Activated CD4-positive, alpha-beta memory T cell treated with anti-CD3 and anti-CD28 coated beads, Interleukin-2, amount 10 ng/mL, durations not matched to agents 7 days and 5 days (primary cell): ENCODE measurements at regions of chr7 and their contacts with region 1.

Region 1: DNA sequence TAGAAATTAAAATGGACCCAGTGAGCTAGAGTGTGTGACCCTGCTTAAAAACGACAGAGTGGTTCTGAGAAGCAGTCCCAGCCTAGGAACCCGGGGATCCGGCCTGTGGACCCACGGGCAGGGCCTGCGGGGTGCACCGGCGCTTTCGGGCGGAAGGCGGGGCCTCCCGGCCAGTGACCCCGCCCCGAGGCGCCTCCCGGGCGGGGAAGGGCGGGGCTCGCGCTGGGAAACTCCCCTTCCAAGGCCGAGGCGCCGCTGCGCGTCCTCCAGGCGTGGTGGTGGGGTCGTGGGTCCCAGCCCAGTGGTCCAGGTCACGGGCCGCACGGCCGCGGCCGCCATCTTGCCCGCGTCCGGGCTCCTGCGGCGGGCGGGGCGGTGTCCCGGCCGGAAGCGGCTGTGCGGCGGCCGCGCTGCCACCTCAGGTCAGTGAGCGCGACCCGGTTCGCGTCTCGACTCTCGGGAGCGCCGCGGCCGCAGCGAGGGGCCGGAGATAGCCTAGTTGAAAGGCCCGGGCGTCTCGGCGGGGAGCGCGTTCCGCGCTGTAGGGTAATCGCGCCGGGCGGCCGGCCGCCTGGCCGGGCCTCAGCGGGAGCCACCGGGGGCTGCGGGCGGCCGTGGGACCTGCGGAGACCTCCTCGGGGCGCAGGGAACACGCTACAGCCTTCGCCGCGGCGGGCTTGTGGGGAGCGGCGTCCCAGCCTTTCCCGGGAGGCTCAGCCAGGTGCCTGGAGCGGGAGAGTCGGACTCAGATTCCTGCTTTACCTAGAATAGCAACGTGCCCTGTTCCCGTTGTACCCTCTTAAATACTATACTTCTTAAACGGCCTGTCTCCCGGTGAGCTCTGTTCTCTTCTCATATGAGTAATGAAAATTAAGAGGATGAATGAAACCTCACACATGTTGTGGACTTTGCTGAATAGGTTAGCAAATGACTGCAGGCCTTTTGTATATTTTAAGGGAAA is at the start of gene MIOS:
- DNase-seq: peak; percentile 83
- H3K4me3 Mint-ChIP-seq: peak within 1 kb of the TSS; percentile 67
- H3K27ac Mint-ChIP-seq: peak within 1 kb of the TSS; percentile 36
- H3K4me1 Mint-ChIP-seq: peaks cover 34% of the 10 kb centered on the region
- H3K27me3 Mint-ChIP-seq: no peaks in the 10 kb centered on the region
- total RNA-seq, gene MIOS: 22.8 to 24.6 TPM

Region 2: GRCh38 chr7:7607010-7607409 is 40.1 kb after region 1 on chr7:
- CTCF ChIA-PET with region 1: no interaction called
- POLR2A ChIA-PET with region 1: no interaction called
- DNase-seq: no peak
- H3K4me3 Mint-ChIP-seq: no peak overlapping the region
- H3K27ac Mint-ChIP-seq: no peak overlapping the region
- H3K4me1 Mint-ChIP-seq: no peaks in the 10 kb centered on the region
- H3K27me3 Mint-ChIP-seq: no peaks in the 10 kb centered on the region

Region 3: GRCh38 chr7:7640221-7641128 is 73.5 kb after region 1 on chr7 and contains the start of gene UMAD1:
- CTCF ChIA-PET with region 1: no interaction called
- POLR2A ChIA-PET with region 1: interaction called, 36 read pairs
- DNase-seq: peak; percentile 99
- H3K4me3 Mint-ChIP-seq: peak within 1 kb of the TSS; percentile 90
- H3K27ac Mint-ChIP-seq: peak within 1 kb of the TSS; percentile 90
- H3K4me1 Mint-ChIP-seq: peaks cover 36% of the 10 kb centered on the region
- H3K27me3 Mint-ChIP-seq: no peaks in the 10 kb centered on the region
- total RNA-seq, gene UMAD1: 16.1 to 16.7 TPM

Region 4: DNA sequence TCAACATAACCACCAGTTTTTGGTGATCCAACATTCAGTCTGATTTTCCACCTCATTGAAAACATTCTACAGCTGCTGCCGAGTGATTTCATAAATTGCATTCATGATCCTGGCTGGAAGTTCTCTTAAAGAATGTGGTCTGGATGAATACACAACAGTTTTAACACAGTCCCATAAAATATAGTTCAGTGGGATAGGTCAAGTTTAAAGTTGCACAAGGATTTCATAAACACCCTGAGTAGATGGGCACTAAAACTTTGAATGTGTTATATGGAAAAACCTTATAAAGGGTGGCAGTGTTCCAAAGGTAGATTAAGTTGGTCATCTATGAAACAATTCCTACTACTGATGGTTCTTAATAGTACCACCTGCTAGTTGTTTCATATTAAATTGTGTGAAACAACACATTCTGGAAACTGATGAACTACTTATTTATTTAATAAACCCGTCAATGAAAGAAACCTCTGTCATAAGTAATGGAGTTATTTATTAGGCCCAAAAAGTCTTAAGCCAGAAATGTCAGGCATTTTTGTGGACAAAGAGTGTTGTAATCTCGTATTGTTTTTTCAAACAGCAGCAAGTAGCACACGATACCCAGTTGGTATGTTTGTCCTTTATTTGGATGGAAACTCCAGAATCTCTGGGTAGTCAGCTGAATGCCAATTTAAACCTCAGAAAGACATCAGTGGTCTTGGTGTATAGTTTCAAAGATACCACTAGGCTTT is 165.8 kb after region 1 on chr7:
- CTCF ChIA-PET with region 1: no interaction called
- POLR2A ChIA-PET with region 1: no interaction called
- DNase-seq: no peak
- H3K4me3 Mint-ChIP-seq: no peak overlapping the region
- H3K27ac Mint-ChIP-seq: no peak overlapping the region
- H3K4me1 Mint-ChIP-seq: peaks cover 2% of the 10 kb centered on the region
- H3K27me3 Mint-ChIP-seq: no peaks in the 10 kb centered on the region